Calu3 (cell line): ENCODE measurements at regions of chr20 and their contacts with region 1.

Region 1: DNA sequence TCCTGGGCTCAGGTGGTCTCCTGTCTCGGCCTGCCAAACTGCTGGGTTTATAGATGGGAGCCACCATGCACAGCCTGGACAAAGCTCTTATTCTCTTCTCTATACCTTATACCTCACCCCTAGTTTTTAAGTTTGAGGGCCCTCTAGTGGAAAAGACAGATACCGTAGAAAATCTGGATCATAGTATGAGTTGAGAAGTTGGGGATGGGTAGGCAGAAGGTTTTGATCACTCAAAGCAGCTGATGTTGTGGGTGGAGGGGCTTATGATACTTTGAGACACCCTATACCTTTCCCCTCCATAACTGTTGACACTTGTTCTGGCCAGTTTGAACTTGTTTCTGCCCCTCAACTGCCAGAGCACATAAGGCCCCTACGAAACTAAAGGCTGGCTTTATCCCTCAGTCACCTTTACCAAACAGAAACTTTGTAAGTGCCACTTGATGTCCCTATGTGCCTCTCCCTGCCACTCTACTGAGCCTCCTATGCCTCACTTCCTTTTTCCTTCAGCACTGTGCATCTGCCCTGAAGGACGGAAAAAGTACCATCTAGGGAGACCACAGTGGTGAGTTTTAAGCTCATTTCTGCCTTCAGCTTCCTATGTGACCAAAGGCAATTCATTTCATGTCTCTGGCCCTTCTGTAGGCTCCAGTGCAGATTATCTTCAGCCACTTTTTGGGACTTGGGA is 28.6 kb downstream of the RALY start:
- DNase-seq: peak; percentile 35
- H3K4me3 Mint-ChIP-seq: no peak overlapping the region
- H3K27ac Mint-ChIP-seq: no peak overlapping the region
- H3K4me1 Mint-ChIP-seq: peaks cover 76% of the 10 kb centered on the region
- H3K27me3 Mint-ChIP-seq: no peaks in the 10 kb centered on the region
- CTCF ChIP-seq: no peak

Region 2: GRCh38 chr20:33862709-33863403 is 159.4 kb before region 1 on chr20:
- CTCF ChIA-PET with region 1: interaction called, 5 read pairs
- intact Hi-C with region 1: loop called (anchors 10 kb)
- DNase-seq: peak; percentile 71
- H3K4me3 Mint-ChIP-seq: no peak overlapping the region
- H3K27ac Mint-ChIP-seq: no peak overlapping the region
- H3K4me1 Mint-ChIP-seq: peaks cover 17% of the 10 kb centered on the region
- H3K27me3 Mint-ChIP-seq: peaks cover 13% of the 10 kb centered on the region
- CTCF ChIP-seq: peak; percentile 92

Region 3: GRCh38 chr20:33915726-33916331 is 106.5 kb before region 1 on chr20:
- CTCF ChIA-PET with region 1: interaction called, 7 read pairs
- intact Hi-C with region 1: loop called (anchors 1 kb)
- DNase-seq: peak; percentile 81
- H3K4me3 Mint-ChIP-seq: no peak overlapping the region
- H3K27ac Mint-ChIP-seq: no peak overlapping the region
- H3K4me1 Mint-ChIP-seq: peaks cover 31% of the 10 kb centered on the region
- H3K27me3 Mint-ChIP-seq: no peaks in the 10 kb centered on the region
- CTCF ChIP-seq: peak; percentile 89